B cell (primary cell): ENCODE measurements at regions of chr19 and their contacts with region 1.

Region 1: DNA sequence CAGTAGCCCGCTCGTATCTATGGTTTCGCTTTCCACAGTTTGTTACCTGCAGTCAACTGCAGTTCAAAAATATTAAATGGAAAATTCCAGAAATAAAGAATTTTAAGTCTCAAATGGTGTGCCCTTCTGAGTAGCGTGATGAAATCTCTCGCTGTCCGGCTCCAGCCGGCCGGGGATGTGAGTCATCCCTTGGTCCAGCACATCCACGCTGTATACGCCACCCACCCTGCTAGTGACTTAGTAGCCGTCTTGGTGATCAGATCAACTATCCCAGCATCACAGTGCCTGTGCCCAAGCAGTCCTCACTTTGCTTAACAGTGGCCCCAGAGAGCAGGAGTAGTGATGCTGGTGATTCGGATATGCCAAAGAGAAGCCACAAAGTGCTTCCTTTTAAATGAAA is 40.0 kb downstream of the ZNF331 start:
- DNase-seq: peak; percentile 45
- ATAC-seq: no peak
- H3K4me3 ChIP-seq: no peak overlapping the region
- H3K4me3 Mint-ChIP-seq: no peak overlapping the region
- H3K27ac ChIP-seq: no peak overlapping the region
- H3K27ac Mint-ChIP-seq: no peak overlapping the region
- H3K4me1 ChIP-seq: no peaks in the 10 kb centered on the region
- H3K4me1 Mint-ChIP-seq: no peaks in the 10 kb centered on the region
- H3K27me3 ChIP-seq: no peaks in the 10 kb centered on the region
- H3K27me3 Mint-ChIP-seq: no peaks in the 10 kb centered on the region
- CTCF ChIP-seq: no peak

Region 2: DNA sequence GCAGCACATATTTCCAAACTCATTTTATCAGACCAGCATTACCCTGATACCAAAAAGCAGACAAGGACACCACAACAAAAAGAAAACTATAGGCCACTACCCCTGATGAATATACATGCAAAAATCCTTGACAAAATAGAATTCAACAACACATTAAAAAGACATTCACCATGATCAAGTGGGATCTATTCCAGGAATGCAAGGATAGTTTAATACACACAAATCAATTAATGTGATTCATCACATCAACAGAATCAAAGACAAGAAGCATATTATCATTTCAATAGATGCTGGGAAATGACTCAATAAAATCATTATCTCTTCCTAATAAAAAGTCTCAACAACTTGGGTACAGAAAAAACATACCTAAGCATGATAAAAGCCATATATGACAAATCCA is 430.3 kb before region 1 on chr19:
- CTCF ChIA-PET with region 1: no interaction called
- POLR2A ChIA-PET with region 1: no interaction called
- intact Hi-C with region 1: loop called (anchors 5 kb)
- DNase-seq: no peak
- ATAC-seq: no peak
- H3K4me3 ChIP-seq: no peak overlapping the region
- H3K4me3 Mint-ChIP-seq: no peak overlapping the region
- H3K27ac ChIP-seq: no peak overlapping the region
- H3K27ac Mint-ChIP-seq: no peak overlapping the region
- H3K4me1 ChIP-seq: no peaks in the 10 kb centered on the region
- H3K4me1 Mint-ChIP-seq: no peaks in the 10 kb centered on the region
- H3K27me3 ChIP-seq: no peaks in the 10 kb centered on the region
- H3K27me3 Mint-ChIP-seq: no peaks in the 10 kb centered on the region
- CTCF ChIP-seq: no peak

Region 3: GRCh38 chr19:53504885-53505284 is 73.1 kb before region 1 on chr19:
- CTCF ChIA-PET with region 1: no interaction called
- POLR2A ChIA-PET with region 1: no interaction called
- intact Hi-C with region 1: no loop called
- DNase-seq: no peak
- ATAC-seq: no peak
- H3K4me3 ChIP-seq: no peak overlapping the region
- H3K4me3 Mint-ChIP-seq: no peak overlapping the region
- H3K27ac ChIP-seq: no peak overlapping the region
- H3K27ac Mint-ChIP-seq: no peak overlapping the region
- H3K4me1 ChIP-seq: no peaks in the 10 kb centered on the region
- H3K4me1 Mint-ChIP-seq: peaks cover 1% of the 10 kb centered on the region
- H3K27me3 ChIP-seq: peaks cover 0 to 18% (median 1%) of the 10 kb centered on the region in 4 experiments
- H3K27me3 Mint-ChIP-seq: peaks cover 27% of the 10 kb centered on the region
- CTCF ChIP-seq: no peak

Region 4: GRCh38 chr19:54002495-54003315 is 424.7 kb after region 1 on chr19:
- CTCF ChIA-PET with region 1: no interaction called
- POLR2A ChIA-PET with region 1: no interaction called
- intact Hi-C with region 1: no loop called
- DNase-seq: no peak
- ATAC-seq: no peak
- H3K4me3 ChIP-seq: no peak overlapping the region
- H3K4me3 Mint-ChIP-seq: no peak overlapping the region
- H3K27ac ChIP-seq: no peak overlapping the region
- H3K27ac Mint-ChIP-seq: no peak overlapping the region
- H3K4me1 ChIP-seq: no peaks in the 10 kb centered on the region
- H3K4me1 Mint-ChIP-seq: no peaks in the 10 kb centered on the region
- H3K27me3 ChIP-seq: peaks cover 0 to 3% (median 0%) of the 10 kb centered on the region in 4 experiments
- H3K27me3 Mint-ChIP-seq: peaks cover 15% of the 10 kb centered on the region
- CTCF ChIP-seq: no peak